Tibial artery (tissue), 4 donors: ENCODE measurements at regions of chr2 and their contacts with region 1.

Region 1: GRCh38 chr2:12716282-12717190 is at the start of gene TRIB2:
- DNase-seq: peak; percentile 82 to 95
- H3K4me3 ChIP-seq: peak within 1 kb of the TSS; percentile 80 to 89
- H3K27ac ChIP-seq: peak within 1 kb of the TSS; percentile 91 to 93
- H3K4me1 ChIP-seq: peaks cover 3 to 56% (median 28%) of the 10 kb centered on the region in 4 donors
- H3K27me3 ChIP-seq: no peaks in the 10 kb centered on the region
- CTCF ChIP-seq: no peak

Region 2: DNA sequence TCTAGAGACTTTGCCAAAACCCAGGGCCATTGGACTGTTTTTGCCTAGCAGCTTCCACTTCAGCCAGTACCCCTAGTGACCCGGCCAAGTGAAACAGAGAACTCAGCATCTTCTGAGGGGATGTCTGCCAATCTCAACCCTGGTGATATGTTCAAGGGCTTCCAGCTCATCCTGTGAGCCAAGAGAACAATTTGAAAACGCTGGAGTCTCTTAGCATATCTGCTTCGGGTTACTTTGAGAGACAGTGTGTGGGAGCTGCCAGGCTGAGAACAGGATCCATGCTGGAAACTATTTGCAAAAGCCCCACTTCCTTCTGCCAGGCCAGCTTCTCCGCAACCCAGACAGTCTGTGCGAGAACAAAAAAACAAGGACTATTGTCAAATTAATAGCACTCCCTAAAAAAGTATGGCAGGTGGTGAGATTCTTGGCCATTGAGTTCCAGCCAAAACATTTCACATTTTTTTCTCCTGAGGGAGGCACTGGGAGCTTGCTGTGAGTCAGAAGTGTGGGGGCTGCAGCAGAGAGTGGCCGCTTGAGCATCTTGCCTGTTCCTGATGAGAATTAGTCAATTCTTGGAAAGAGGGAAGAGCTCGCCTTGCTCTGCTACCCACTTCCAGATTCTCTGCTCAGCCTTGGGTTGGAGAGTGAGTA is 395.4 kb before region 1 on chr2:
- intact Hi-C with region 1: loop called (anchors 10 kb)
- DNase-seq: peak; percentile 72 to 86
- H3K4me3 ChIP-seq: no peak overlapping the region
- H3K27ac ChIP-seq: peak overlapping the region; percentile 43 to 57
- H3K4me1 ChIP-seq: peaks cover 0 to 51% (median 20%) of the 10 kb centered on the region in 4 donors
- H3K27me3 ChIP-seq: no peaks in the 10 kb centered on the region
- CTCF ChIP-seq: no peak

Region 3: DNA sequence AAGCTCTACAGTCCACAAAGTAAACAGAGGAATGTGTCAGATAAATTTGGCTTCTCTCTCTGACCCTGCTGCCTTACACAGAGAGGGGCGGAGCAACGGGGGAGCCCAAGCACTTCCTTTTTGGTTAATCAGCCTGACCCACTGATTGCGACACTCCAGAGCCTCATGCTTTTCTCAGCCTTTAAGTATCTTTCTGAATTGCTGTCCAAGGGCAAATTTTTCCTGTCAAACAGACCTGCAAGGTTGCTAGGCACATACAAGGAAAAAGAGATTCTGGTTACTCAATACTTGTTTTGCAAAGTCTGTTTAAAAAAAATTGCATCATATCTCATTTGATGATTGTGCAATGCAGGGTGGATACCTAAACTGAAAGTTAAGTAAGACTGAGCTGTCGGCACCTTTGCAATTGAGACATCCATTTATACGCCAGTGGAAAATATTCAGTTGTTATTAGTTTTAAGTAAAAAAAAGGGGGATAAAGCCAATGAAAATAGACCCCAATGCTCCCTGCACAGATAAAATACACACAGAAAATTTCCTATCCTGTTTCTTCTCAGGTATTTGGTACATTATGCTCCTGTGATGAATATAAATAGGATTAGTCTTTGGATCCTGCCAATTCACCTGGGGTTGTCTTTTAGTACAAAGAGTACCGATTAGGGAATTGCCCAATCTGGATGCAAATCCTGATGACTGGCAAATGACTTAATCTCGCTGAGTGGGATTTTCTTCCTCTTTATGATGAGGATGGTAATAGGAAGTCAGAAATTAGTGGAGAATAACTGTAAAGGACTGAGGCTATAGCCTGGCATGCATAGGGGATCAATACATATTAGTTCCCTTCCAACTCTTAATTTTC is 260.0 kb before region 1 on chr2:
- intact Hi-C with region 1: loop called (anchors 10 kb)
- DNase-seq: peak; percentile 96 to 98
- H3K4me3 ChIP-seq: no peak overlapping the region
- H3K27ac ChIP-seq: peak overlapping the region; percentile 51 to 75
- H3K4me1 ChIP-seq: peaks cover 0 to 38% (median 13%) of the 10 kb centered on the region in 4 donors
- H3K27me3 ChIP-seq: no peaks in the 10 kb centered on the region
- CTCF ChIP-seq: peak in 1 of 2 experiments; percentile 27

Region 4: DNA sequence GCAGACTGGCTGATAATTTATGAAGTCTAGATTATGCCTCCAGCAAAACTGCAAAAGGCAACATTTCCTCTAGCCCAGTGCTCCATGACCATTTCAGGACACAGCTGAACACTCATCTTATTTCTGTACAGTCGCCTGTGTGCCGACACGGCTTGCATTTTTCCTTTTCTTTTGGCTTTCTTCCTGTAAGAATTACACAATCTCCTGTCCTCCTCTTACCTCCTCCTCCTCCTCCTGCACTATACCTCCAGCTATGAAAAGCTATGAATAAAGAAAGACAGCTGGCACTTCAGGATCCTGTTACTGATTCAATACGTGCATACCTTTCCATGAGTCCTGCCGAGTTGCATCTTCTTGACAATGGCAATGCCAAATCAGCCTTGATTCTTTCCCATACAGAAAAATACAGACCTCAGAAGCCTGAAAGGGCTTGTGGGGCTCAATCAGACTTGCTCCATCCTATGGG is 32.0 kb before region 1 on chr2:
- intact Hi-C with region 1: loop called (anchors 1 kb)
- DNase-seq: no peak
- H3K4me3 ChIP-seq: no peak overlapping the region
- H3K27ac ChIP-seq: peak overlapping the region; percentile 10 to 50
- H3K4me1 ChIP-seq: peaks cover 0 to 20% (median 13%) of the 10 kb centered on the region in 4 donors
- H3K27me3 ChIP-seq: no peaks in the 10 kb centered on the region
- CTCF ChIP-seq: no peak

Region 5: DNA sequence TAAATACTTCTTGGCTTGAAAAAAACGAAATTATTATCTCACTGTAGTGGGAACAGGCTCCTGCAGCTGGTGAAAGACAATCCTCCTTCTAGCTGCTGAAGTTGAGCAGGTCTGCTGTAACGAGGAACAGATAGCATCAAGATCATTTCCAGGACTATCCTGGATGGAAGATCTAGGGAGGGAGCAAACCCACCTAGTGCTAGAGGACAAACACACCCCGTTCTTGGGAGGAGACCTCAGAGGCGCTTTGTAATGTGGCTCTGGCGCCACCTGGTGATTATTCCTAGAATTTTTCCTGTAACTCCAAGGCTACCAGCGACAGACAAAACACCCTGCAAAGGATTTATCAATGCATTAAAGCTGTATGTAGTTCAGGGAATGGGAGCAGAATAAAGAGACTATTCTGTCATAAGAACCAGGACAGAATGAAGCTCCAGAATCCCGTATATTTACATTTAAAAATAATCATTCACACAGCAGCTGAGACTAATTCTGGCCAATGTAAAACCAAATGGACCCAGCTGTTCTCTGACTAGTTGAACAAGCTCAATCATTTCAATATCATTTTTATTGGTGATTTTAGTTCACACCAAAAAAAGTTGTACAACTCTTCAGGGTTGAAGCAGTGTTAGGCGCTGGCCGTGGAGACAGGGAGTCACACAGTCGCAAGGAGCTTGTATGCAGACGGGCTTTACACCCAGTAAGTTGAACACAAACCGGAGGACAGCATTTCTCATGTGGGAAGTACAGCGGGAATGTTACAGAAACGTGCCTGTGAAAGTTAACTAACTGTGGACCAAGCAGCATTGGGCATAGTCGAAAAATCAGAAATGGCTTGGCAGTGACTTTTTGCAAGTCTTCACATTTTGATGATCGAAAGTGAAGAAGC is 290.5 kb after region 1 on chr2:
- intact Hi-C with region 1: loop called (anchors 5 kb)
- DNase-seq: peak; percentile 38 to 65
- H3K4me3 ChIP-seq: no peak overlapping the region
- H3K27ac ChIP-seq: no peak overlapping the region
- H3K4me1 ChIP-seq: peaks cover 0 to 9% (median 4%) of the 10 kb centered on the region in 4 donors
- H3K27me3 ChIP-seq: peaks cover 0 to 7% of the 10 kb centered on the region in 2 donors
- CTCF ChIP-seq: peak; percentile 85 to 91